Activated B cell treated with CpG ODN at 0.5 μM for 24 hours (primary cell): ENCODE measurements at regions of chr3 and their contacts with region 1.

Region 1: DNA sequence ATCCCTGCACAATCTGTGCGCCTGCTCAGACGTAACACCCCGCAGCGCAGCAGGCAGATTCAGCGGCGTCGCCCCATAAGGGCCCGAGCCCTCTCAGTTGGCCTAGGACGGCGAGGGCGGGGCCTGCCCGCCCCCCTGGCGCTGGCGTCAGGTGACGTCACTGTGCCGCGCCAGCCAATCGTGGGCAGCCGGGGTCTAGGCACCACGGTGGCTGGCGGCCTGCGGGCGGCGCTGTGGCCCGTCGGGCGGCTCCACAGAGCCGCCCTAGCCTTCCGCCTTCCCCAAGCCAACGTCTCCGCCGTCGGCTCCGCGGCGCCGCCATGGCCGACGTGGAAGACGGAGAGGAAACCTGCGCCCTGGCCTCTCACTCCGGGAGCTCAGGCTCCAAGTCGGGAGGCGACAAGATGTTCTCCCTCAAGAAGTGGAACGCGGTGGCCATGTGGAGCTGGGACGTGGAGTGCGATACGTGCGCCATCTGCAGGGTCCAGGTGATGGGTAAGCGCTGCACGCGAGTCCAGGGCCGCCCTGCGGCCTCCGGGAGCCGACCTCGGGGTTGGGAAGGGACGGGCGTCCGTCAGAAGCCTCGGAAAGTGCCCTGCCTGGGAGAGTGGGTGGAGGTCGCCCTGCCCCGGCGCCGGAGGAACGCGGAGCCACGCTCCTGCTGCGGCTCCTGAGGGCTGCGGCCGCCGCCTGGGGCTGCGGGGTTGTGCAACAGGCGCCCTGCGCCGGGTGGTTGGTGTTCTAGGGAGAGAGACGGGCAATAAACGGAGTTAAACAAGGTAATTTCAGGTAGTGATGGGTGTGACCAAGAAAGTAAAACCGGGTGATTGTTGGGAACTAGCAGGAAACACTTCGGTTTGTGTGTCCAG is at the start of gene RNF7:
- DNase-seq: peak; percentile 98
- ATAC-seq: peak; percentile 93
- H3K4me3 Mint-ChIP-seq: peak within 1 kb of the TSS; percentile 96
- H3K27ac Mint-ChIP-seq: peak within 1 kb of the TSS; percentile 96
- H3K4me1 Mint-ChIP-seq: peaks cover 40% of the 10 kb centered on the region
- H3K27me3 Mint-ChIP-seq: no peaks in the 10 kb centered on the region
- CTCF ChIP-seq: no peak
- total RNA-seq, gene RNF7: 60.7 and 62.1 TPM in 2 replicates

Region 2: DNA sequence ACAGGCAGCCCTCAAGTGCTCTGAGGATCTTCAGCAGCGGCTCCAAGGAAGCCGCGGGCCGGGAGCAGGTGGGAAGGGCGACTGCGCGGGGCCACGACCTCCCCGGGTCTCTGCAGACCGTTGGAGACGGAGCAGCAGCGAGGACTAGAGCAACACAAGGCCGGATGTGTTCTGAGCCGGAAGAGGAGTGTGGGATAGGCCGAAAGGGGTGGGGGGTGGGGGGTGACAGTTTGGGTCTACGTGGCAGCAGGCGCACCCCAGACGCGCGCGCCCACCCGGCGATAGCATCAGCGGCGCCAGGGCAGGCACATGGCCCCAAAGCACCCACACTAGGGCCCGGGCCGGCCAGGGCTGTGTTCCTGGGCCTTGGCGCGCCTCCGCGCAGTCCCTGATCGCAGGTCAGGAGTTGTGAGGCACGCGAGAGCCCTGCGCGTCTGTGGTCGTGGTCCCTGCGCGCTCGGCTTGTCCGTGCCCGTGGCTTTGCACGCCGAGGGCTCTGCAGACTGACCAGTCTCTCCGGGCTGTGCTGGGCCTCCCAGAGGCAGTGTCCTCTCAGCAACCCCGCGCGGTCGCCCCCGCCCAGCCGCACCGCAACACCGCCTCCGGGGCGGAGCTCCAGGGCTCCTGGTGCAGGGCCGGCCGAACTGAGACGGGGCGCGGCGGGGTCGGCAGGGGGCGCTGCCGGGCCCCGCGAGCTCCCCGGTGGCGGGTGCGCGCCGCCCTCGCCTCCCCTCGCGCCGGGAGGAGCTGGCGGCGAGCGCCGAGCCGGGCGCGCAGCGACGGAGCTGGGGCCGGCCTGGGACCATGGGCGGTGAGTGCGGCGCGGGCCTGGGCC is 506.9 kb before region 1 on chr3 and contains the start of gene PXYLP1:
- CTCF ChIA-PET with region 1: interaction called, 3 read pairs
- POLR2A ChIA-PET with region 1: no interaction called
- intact Hi-C with region 1: loop called (anchors 2 kb)
- DNase-seq: peak; percentile 91
- ATAC-seq: peak; percentile 96
- H3K4me3 Mint-ChIP-seq: peak within 1 kb of the TSS; percentile 93
- H3K27ac Mint-ChIP-seq: peak within 1 kb of the TSS; percentile 94
- H3K4me1 Mint-ChIP-seq: peaks cover 16% of the 10 kb centered on the region
- H3K27me3 Mint-ChIP-seq: no peaks in the 10 kb centered on the region
- CTCF ChIP-seq: no peak
- total RNA-seq, gene PXYLP1: 2.3 and 2.7 TPM in 2 replicates

Region 3: GRCh38 chr3:141370065-141370533 is 368.2 kb before region 1 on chr3:
- CTCF ChIA-PET with region 1: no interaction called
- POLR2A ChIA-PET with region 1: no interaction called
- intact Hi-C with region 1: no loop called
- DNase-seq: no peak
- ATAC-seq: peak; percentile 99
- H3K4me3 Mint-ChIP-seq: no peak overlapping the region
- H3K27ac Mint-ChIP-seq: peak overlapping the region; percentile 15
- H3K4me1 Mint-ChIP-seq: peaks cover 13% of the 10 kb centered on the region
- H3K27me3 Mint-ChIP-seq: no peaks in the 10 kb centered on the region
- CTCF ChIP-seq: no peak

Region 4: DNA sequence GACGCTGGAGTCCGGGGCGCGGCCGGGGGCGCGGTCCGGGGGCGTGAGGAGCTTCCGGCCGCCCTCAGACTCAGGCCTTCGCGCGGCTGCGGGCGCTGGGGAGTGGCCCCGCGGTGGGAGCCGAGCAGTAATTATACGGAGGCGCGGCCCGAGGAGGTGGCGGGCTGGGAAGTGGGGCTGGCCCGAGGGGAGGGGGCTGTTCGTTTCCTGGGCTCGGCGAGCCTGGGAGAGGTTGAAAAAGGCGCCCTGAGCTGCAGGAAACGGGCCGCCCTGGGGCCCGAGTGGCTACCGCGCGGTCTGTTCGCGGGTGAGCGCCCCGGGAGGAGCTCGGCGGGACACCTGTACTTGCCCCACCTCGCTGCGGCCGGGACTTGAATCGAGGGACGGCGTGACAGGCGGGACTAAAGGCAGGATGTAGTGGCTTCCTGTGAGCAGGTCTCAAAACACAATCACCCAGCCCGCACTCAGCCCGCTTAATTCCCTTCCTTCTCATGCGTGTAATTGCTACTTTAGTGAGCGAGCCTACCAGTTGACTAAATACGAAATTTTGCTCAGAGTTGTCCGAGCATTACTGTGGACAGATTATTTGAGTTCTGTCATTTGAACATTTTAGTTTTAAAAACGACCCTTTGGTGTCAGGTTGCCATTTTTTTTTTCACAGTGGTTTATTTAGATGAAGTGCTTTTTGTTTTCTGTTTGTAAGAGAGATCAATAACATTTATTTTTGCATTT is 250.6 kb before region 1 on chr3:
- CTCF ChIA-PET with region 1: no interaction called
- POLR2A ChIA-PET with region 1: interaction called, 5 read pairs
- intact Hi-C with region 1: loop called (anchors 5 kb)
- DNase-seq: no peak
- ATAC-seq: peak; percentile 73
- H3K4me3 Mint-ChIP-seq: peak overlapping the region; percentile 84
- H3K27ac Mint-ChIP-seq: peak overlapping the region; percentile 92
- H3K4me1 Mint-ChIP-seq: peaks cover 76% of the 10 kb centered on the region
- H3K27me3 Mint-ChIP-seq: no peaks in the 10 kb centered on the region
- CTCF ChIP-seq: no peak

Region 5: DNA sequence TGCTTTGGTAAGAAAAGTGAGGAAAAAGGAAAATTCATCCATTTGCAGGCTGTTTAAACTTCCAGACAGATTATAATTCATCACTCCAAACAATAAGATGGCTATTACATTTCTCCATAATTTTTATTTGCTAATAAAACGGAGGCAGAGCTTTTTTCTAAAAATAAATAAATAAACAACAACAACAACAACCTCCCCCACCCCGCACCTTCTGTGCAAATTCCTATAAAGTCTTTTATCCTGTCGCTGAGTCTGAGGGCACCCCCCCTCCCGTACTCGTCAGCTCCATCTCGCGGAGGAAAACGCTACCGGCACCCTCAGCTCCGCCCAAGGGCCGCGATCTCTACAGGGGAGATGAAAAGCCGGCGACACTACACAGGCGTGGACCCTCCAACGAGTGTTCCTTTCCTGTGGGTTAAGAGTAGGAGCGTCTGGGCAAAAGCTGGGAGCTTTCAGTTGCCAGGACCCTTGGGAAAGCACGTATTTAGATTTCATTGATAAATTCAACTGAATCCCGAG is 137.2 kb after region 1 on chr3:
- CTCF ChIA-PET with region 1: interaction called, 25 read pairs
- POLR2A ChIA-PET with region 1: interaction called, 42 read pairs
- intact Hi-C with region 1: loop called (anchors 1 kb)
- DNase-seq: peak; percentile 72
- ATAC-seq: peak; percentile 64
- H3K4me3 Mint-ChIP-seq: peak overlapping the region; percentile 93
- H3K27ac Mint-ChIP-seq: peak overlapping the region; percentile 93
- H3K4me1 Mint-ChIP-seq: peaks cover 28% of the 10 kb centered on the region
- H3K27me3 Mint-ChIP-seq: no peaks in the 10 kb centered on the region
- CTCF ChIP-seq: no peak

Region 6: DNA sequence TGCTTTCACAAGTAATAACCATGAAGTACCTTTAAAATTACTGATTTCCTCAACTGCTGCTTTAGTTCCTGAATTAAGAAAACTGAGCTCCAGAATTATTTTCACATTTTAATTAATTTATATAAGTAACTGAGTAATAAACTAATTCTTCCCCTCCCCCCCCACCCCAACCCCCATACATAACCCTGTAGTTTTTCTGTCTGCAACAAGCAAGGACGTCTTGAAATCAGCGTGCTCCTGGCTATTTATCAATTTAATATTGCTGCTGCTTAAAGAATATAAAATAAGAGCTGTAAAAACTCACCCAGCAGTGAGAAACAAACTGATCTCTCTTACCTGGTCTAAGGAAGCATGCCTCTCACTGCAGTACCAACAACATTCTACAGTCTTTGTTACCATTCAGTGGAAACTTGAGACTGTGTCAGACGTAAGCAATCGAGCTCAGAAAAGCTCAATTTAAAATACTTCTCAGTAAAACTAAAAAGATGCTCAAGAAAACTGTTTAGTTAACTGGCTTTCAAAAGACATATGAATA is 290.1 kb after region 1 on chr3:
- CTCF ChIA-PET with region 1: no interaction called
- POLR2A ChIA-PET with region 1: no interaction called
- intact Hi-C with region 1: loop called (anchors 2 kb)
- DNase-seq: no peak
- ATAC-seq: peak; percentile 87
- H3K4me3 Mint-ChIP-seq: peak overlapping the region; percentile 89
- H3K27ac Mint-ChIP-seq: peak overlapping the region; percentile 66
- H3K4me1 Mint-ChIP-seq: peaks cover 18% of the 10 kb centered on the region
- H3K27me3 Mint-ChIP-seq: no peaks in the 10 kb centered on the region
- CTCF ChIP-seq: no peak

Region 7: GRCh38 chr3:142279965-142280590 is 541.8 kb after region 1 on chr3:
- CTCF ChIA-PET with region 1: no interaction called
- POLR2A ChIA-PET with region 1: no interaction called
- intact Hi-C with region 1: loop called (anchors 2 kb)
- DNase-seq: no peak
- ATAC-seq: peak; percentile 80
- H3K4me3 Mint-ChIP-seq: no peak overlapping the region
- H3K27ac Mint-ChIP-seq: no peak overlapping the region
- H3K4me1 Mint-ChIP-seq: no peaks in the 10 kb centered on the region
- H3K27me3 Mint-ChIP-seq: no peaks in the 10 kb centered on the region
- CTCF ChIP-seq: no peak

Region 8: DNA sequence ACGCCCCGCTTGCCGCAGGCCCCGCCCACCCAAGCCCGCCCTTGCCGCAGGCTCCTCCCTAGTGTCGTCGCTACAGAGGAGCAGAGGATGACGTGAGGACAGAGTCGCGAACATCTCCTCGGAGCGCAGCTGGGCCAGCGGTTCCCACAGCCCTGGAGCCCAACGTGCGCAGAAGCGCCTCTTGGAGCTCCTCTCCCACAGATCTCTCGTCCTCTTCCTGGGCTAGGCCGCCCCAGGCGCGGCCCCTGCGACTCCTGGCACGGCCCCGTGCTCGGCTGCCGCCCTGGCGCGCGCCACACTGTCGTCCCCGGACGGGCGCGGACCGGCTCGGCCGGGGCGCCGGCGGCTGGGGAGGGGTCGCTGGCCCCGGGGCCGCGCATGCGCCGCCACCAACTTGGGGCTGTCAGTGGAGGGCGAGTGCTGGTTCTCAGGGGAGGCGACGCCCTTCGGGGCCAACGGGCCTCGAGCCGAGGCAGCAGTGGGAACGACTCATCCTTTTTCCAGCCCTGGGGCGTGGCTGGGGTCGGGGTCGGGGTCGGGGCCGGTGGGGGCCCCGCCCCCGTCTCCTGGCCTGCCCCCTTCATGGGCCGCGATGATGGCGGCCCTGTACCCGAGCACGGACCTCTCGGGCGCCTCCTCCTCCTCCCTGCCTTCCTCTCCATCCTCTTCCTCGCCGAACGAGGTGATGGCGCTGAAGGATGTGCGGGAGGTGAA is 985.9 kb after region 1 on chr3 and contains the start of gene TRPC1:
- CTCF ChIA-PET with region 1: no interaction called
- POLR2A ChIA-PET with region 1: no interaction called
- intact Hi-C with region 1: loop called (anchors 10 kb)
- DNase-seq: peak; percentile 54
- ATAC-seq: peak; percentile 95
- H3K4me3 Mint-ChIP-seq: peak within 1 kb of the TSS; percentile 87
- H3K27ac Mint-ChIP-seq: peak within 1 kb of the TSS; percentile 76
- H3K4me1 Mint-ChIP-seq: peaks cover 5% of the 10 kb centered on the region
- H3K27me3 Mint-ChIP-seq: peaks cover 22% of the 10 kb centered on the region
- CTCF ChIP-seq: no peak
- total RNA-seq, gene TRPC1: 1.2 and 1.3 TPM in 2 replicates

Region 9: GRCh38 chr3:142929109-142929508 is 1190.9 kb after region 1 on chr3:
- CTCF ChIA-PET with region 1: no interaction called
- POLR2A ChIA-PET with region 1: no interaction called
- intact Hi-C with region 1: no loop called
- DNase-seq: no peak
- ATAC-seq: no peak
- H3K4me3 Mint-ChIP-seq: no peak overlapping the region
- H3K27ac Mint-ChIP-seq: no peak overlapping the region
- H3K4me1 Mint-ChIP-seq: no peaks in the 10 kb centered on the region
- H3K27me3 Mint-ChIP-seq: peaks cover 19% of the 10 kb centered on the region
- CTCF ChIP-seq: no peak